Activated CD4-positive, alpha-beta T cell treated with anti-CD3 and anti-CD28 coated beads for 36 hours (primary cell): ENCODE measurements at regions of chr5 and their contacts with region 1.

Region 1: GRCh38 chr5:75053304-75054133 is 1.2 kb upstream of the GCNT4 start:
- DNase-seq: peak; percentile 72
- ATAC-seq: peak; percentile 39
- H3K4me3 Mint-ChIP-seq: peak overlapping the region; percentile 79
- H3K27ac Mint-ChIP-seq: peak overlapping the region; percentile 82
- H3K4me1 Mint-ChIP-seq: peaks cover 82% of the 10 kb centered on the region
- H3K27me3 Mint-ChIP-seq: peaks cover 3% of the 10 kb centered on the region

Region 2: GRCh38 chr5:74865804-74866595 is 187.5 kb before region 1 on chr5 and contains the start of gene FAM169A:
- CTCF ChIA-PET with region 1: interaction called, 4 read pairs
- POLR2A ChIA-PET with region 1: interaction called, 3 read pairs
- intact Hi-C with region 1: loop called in 1 of 2 experiments (anchors 2 kb)
- DNase-seq: peak; percentile 65
- ATAC-seq: peak; percentile 69
- H3K4me3 Mint-ChIP-seq: peak within 1 kb of the TSS; percentile 92
- H3K27ac Mint-ChIP-seq: peak within 1 kb of the TSS; percentile 95
- H3K4me1 Mint-ChIP-seq: peaks cover 29% of the 10 kb centered on the region
- H3K27me3 Mint-ChIP-seq: peaks cover 2% of the 10 kb centered on the region
- total RNA-seq, gene FAM169A: 6.1 to 9.1 TPM

Region 3: GRCh38 chr5:75236322-75237316 is 183.1 kb after region 1 on chr5 and contains the start of gene ANKRD31:
- CTCF ChIA-PET with region 1: interaction called, 35 read pairs
- POLR2A ChIA-PET with region 1: interaction called, 9 read pairs
- intact Hi-C with region 1: loop called (anchors 1 to 2 kb)
- DNase-seq: peak; percentile 94
- ATAC-seq: peak; percentile 97
- H3K4me3 Mint-ChIP-seq: peak within 1 kb of the TSS; percentile 87
- H3K27ac Mint-ChIP-seq: peak within 1 kb of the TSS; percentile 96
- H3K4me1 Mint-ChIP-seq: peaks cover 8% of the 10 kb centered on the region
- H3K27me3 Mint-ChIP-seq: no peaks in the 10 kb centered on the region
- total RNA-seq, gene ANKRD31: 0.66 to 0.67 TPM

Region 4: DNA sequence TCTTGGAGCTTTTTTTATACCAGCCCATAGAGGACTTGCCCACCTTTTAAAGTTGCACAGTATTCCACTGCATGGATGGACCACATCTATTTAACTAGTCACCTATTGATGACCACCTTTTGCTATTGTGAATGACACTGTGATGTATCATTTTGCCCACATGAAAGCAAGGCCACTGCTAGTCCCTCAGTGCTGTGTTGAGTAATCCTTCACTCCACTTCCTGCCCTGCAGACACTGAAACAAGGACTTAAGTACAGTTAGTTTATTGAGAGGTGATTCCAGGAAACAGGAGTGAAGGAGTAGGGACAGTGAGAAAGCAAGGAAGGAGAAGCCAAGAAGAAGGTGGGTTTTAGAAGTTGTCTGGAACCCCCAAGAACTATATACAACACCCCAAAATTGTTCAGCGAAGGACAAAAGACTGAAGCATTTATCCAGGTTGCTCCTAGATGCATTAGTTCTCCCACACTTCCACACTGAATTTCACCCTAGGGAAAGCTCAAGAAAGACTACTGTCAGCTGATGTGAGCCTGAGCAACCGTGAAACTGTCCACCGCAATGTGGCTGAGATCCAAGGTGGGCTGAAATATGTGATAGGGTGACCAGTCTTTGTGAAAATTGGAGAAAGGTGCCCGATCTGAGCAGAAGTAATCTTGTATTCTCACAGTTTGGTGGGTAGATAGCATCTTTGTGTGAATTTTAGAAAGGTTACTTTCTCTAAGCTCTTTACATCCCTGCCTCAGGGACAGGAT is 228.4 kb after region 1 on chr5:
- CTCF ChIA-PET with region 1: no interaction called
- POLR2A ChIA-PET with region 1: no interaction called
- intact Hi-C with region 1: no loop called
- DNase-seq: no peak
- ATAC-seq: no peak
- H3K4me3 Mint-ChIP-seq: no peak overlapping the region
- H3K27ac Mint-ChIP-seq: no peak overlapping the region
- H3K4me1 Mint-ChIP-seq: no peaks in the 10 kb centered on the region
- H3K27me3 Mint-ChIP-seq: no peaks in the 10 kb centered on the region

Region 5: DNA sequence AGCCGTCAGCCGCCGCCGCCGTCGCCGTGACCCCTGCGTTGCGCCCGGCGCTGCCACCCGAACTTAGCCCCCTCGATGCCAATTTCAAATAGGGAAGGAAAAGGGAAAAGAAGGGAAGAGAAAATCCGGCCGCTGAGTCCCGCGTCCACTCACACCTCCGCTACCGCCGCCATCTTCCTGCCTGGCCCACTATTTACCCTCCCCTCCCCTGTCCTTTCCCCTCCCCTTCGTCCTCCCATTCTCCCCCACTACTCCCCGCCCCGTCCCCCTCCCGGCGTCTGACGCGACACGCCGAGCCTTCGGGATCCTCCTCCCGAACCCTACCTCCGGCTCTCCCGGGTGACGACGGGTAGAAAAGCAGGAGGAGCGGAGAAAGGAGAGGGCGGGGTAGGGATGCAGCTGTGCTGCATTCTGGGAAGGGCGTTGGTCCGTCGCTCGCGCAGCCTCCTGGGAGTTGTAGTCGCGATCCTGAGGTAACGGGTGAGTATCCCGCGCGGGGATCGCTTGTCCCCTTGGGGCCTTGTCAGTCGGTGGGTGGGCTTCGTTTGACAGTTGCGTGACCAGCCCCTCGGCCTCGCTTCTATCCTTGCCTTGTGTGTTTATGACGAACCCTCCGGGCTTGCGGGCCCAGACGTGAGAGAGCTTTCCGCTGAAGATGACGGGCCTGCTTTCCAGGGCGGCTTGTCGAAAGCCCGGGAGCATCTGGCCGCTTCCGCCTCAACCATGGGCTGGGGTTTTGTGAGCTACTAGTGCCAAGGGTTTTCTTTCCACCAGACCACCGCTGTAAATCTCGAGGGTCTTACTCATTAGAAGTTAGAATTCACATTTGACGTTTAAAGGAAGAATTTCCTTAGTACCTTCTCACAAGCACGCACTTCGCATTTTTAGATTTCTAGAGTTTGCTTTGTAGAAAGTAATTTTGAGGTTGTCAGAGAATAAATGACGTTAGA is 458.2 kb after region 1 on chr5 and contains the starts of genes CERT1 and POLK:
- CTCF ChIA-PET with region 1: no interaction called
- POLR2A ChIA-PET with region 1: no interaction called
- intact Hi-C with region 1: loop called in 1 of 2 experiments (anchors 2 kb)
- DNase-seq: peak; percentile 98
- ATAC-seq: peak; percentile 96
- H3K4me3 Mint-ChIP-seq: peak within 1 kb of the TSS; percentile 98
- H3K27ac Mint-ChIP-seq: peak within 1 kb of the TSS; percentile 96
- H3K4me1 Mint-ChIP-seq: peaks cover 47% of the 10 kb centered on the region
- H3K27me3 Mint-ChIP-seq: no peaks in the 10 kb centered on the region
- total RNA-seq, gene CERT1: 21.6 to 24.5 TPM
- total RNA-seq, gene POLK: 35.5 to 49.1 TPM

Region 6: GRCh38 chr5:75681125-75681830 is 627.8 kb after region 1 on chr5:
- CTCF ChIA-PET with region 1: no interaction called
- POLR2A ChIA-PET with region 1: no interaction called
- intact Hi-C with region 1: loop called (anchors 2 to 5 kb)
- DNase-seq: no peak
- ATAC-seq: peak; percentile 45
- H3K4me3 Mint-ChIP-seq: no peak overlapping the region
- H3K27ac Mint-ChIP-seq: no peak overlapping the region
- H3K4me1 Mint-ChIP-seq: peaks cover 13% of the 10 kb centered on the region
- H3K27me3 Mint-ChIP-seq: no peaks in the 10 kb centered on the region